CD4-positive, alpha-beta memory T cell (primary cell): ENCODE measurements at regions of chr13 and their contacts with region 1.

Region 1: DNA sequence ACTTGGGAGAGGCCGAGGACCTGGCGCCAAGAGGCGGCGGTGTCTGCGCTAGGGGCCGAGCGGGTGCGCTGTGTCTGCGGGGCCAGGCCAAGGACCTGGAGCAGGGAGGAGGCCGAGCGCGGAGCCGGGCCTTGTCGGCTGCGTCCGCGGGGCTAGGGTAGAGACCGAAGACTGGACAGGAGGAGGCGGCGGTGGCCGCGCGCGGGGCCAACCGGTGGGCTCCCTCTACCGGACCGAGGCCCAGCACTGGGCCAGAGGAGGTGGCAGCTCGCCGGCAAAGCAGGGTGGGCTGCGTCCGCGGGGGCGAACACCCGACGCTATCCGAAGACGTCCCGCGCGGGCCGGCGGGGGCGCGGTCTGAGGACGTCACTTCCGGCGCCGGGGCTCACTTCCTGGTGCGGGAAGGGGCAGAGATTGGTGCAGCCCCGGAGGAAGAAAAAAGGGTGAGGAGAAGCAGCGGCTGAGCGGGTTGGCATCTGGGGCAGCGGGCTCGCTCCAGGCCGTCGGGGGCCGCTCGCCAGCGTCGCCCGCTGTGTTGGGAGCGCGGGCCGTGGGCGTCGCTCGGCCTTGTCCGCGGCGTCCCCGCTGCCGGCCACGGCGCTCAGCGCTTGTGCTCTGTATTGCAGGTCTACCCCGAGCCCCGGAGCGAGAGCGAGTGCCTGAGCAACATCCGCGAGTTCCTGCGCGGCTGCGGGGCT is 38.3 kb downstream of the ARHGEF7 start:
- DNase-seq: peak; percentile 89 to 92 (median 91)
- H3K4me3 ChIP-seq: peak overlapping the region; percentile 55 to 87
- H3K4me3 Mint-ChIP-seq: peak overlapping the region; percentile 92 to 99 (median 95)
- H3K27ac ChIP-seq: peak overlapping the region; percentile 67
- H3K27ac Mint-ChIP-seq: peak overlapping the region; percentile 85 to 98 (median 93)
- H3K4me1 ChIP-seq: peaks cover 23% of the 10 kb centered on the region
- H3K4me1 Mint-ChIP-seq: peaks cover 13 to 39% (median 27%) of the 10 kb centered on the region in 4 donors
- H3K27me3 ChIP-seq: no peaks in the 10 kb centered on the region
- H3K27me3 Mint-ChIP-seq: no peaks in the 10 kb centered on the region

Region 2: DNA sequence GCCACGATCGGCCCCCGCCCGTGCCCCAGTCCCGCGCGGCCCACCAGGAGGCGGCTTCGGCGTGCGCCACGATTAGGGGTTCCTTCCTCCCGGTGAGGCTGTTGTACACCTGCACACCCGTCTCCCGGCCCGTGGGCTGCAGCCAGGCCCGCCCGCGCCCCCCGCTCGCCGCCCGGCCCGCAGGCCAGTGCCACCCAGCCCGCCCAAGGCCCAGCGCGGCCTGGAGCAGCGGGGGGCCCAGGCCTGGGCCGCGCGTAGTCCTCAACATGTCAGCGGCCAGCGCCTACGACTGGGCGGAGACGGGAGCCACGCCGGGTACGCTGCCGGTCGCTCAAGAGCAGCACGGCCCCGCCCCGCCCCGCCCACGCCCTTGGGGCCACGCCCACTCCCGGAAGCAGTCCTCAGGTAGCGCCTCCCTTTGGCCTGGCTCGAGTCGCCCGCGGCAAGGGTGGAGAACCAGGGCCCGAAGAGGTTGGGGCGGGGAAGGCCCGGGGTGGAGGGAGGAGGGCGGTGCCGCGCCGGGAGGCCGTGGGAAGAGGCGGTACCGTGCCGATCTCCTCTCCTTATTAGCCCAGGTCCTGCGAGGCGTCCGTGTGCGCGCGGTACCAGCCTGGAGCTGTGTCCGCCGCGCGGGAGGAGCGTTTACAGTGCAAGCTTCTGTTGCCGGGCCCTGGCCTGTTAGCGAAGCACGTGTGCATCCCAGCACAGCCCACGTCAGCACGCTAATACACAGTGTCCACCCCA is 447.4 kb before region 1 on chr13 and contains the start of gene CARS2:
- CTCF ChIA-PET with region 1: no interaction called
- POLR2A ChIA-PET with region 1: no interaction called
- intact Hi-C with region 1: loop called (anchors 2 kb)
- DNase-seq: peak; percentile 85 to 93 (median 86)
- H3K4me3 ChIP-seq: peak within 1 kb of the TSS; percentile 49 to 64
- H3K4me3 Mint-ChIP-seq: peak within 1 kb of the TSS; percentile 91 to 96 (median 94)
- H3K27ac ChIP-seq: peak within 1 kb of the TSS; percentile 74
- H3K27ac Mint-ChIP-seq: peak within 1 kb of the TSS; percentile 83 to 96 (median 93)
- H3K4me1 ChIP-seq: peaks cover 41% of the 10 kb centered on the region
- H3K4me1 Mint-ChIP-seq: peaks cover 27 to 49% (median 40%) of the 10 kb centered on the region in 4 donors
- H3K27me3 ChIP-seq: no peaks in the 10 kb centered on the region
- H3K27me3 Mint-ChIP-seq: no peaks in the 10 kb centered on the region
- total RNA-seq, gene CARS2: 99.9 to 102 TPM

Region 3: DNA sequence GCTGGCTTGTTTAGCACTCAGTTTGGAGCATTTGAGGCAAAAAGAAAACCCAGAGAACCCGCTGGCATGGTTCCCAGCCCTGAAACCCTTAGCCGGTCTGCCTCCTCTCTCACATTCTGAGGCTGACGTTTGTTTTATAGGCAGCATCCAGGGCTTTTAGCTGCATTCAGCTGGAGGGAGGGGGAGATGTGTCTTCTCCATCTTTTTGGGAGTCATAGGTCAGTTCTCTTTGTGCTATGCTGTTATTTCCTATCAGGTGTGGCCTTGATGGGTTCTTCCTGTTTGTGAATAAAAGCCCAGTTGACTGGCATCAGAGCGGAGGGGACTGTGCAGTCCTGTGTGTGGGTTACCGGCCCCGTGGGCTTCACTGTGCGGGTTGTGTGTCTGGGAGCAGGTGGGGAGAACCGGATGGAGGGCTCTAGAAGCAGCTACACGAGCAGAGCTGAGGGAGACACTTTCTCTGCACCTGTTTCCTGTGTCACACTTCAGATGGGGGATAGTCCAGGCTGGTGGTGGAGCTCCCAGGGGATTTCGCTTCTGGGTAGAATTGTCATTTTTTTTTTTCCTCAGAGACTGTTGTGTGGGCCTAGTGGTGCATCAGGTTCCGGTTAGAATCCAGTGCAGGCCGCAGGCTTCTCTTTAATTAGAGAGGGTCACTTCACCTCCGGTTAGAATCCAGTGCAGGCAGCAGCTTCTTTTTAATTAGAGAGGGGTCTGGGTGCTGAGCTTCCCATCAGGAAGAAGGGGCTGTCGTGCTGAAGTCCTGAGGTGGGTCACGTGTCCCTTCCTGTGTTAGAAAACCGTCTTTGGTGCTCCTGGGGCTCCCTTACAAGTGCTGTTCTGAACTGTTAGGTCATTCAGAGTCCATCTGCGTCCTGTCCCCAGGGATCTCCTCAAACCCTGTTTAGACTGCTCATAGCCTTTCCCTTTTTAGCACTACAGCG is 31.3 kb after region 1 on chr13:
- CTCF ChIA-PET with region 1: interaction called, 3 read pairs
- POLR2A ChIA-PET with region 1: interaction called, 10 read pairs
- intact Hi-C with region 1: loop called (anchors 1 kb)
- DNase-seq: peak; percentile 39 to 61 (median 47)
- H3K4me3 ChIP-seq: no peak overlapping the region
- H3K4me3 Mint-ChIP-seq: peak overlapping the region; percentile 34 to 88 (median 78)
- H3K27ac ChIP-seq: peak overlapping the region; percentile 39
- H3K27ac Mint-ChIP-seq: peak overlapping the region; percentile 78 to 96 (median 95)
- H3K4me1 ChIP-seq: peaks cover 93% of the 10 kb centered on the region
- H3K4me1 Mint-ChIP-seq: peaks cover 77 to 98% (median 89%) of the 10 kb centered on the region in 4 donors
- H3K27me3 ChIP-seq: no peaks in the 10 kb centered on the region
- H3K27me3 Mint-ChIP-seq: no peaks in the 10 kb centered on the region

Region 4: GRCh38 chr13:111584101-111584672 is 430.8 kb after region 1 on chr13:
- CTCF ChIA-PET with region 1: no interaction called
- POLR2A ChIA-PET with region 1: no interaction called
- intact Hi-C with region 1: no loop called
- DNase-seq: no peak
- H3K4me3 ChIP-seq: no peak overlapping the region
- H3K4me3 Mint-ChIP-seq: no peak overlapping the region
- H3K27ac ChIP-seq: no peak overlapping the region
- H3K27ac Mint-ChIP-seq: no peak overlapping the region
- H3K4me1 ChIP-seq: no peaks in the 10 kb centered on the region
- H3K4me1 Mint-ChIP-seq: no peaks in the 10 kb centered on the region
- H3K27me3 ChIP-seq: no peaks in the 10 kb centered on the region
- H3K27me3 Mint-ChIP-seq: no peaks in the 10 kb centered on the region